Gastrocnemius medialis (tissue), 4 donors: ENCODE measurements at regions of chr5 and their contacts with region 1.

Region 1: DNA sequence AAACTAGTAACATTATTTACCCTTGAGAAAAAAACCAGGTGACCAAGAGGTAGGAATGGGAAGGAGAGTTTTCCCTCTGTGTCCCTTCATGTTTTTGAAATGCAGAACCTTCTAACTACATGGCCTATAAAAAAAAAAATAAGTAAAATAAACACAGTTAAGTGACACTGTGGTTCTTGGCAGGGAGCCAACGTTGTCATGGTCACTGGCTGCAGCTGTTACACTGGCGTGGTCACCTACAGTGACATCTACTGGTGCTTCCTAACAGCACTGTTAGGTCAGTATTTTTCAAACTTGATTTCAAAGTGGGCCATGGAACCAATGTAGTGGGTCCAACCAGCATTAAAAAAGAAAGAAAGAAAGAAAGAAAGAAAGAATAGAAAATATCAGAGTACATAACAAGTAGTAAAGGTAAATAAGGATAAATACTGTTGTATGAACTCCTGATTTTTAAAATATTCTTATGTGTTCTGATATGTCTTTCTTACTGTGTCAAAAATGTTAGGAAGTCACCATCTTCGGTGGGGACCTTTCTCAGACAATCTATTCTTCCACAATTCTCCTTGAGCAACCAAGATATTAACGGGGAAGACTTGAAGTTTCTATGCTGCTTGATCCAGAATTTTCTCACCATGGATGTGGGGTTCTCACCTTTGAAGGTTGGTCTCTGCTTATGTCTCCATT is 59.1 kb upstream of the PJA2 start:
- DNase-seq: peak; percentile 88 to 89
- ATAC-seq: peak; percentile 95 to 100
- H3K4me3 ChIP-seq: no peak overlapping the region
- H3K27ac ChIP-seq: no peak overlapping the region
- H3K4me1 ChIP-seq: peaks cover 0 to 9% of the 10 kb centered on the region in 2 donors
- H3K27me3 ChIP-seq: no peaks in the 10 kb centered on the region
- CTCF ChIP-seq: peak; percentile 42 to 83 (median 64)
- POLR2A ChIP-seq: no peak

Region 2: GRCh38 chr5:108642167-108642906 is 826.5 kb before region 1 on chr5:
- in situ Hi-C with region 1: no loop called
- intact Hi-C with region 1: loop called (anchors 2 kb)
- DNase-seq: peak; percentile 5 to 27
- ATAC-seq: peak; percentile 75 to 94
- H3K4me3 ChIP-seq: peak overlapping the region in 1 of 4 donors; percentile 20
- H3K27ac ChIP-seq: no peak overlapping the region
- H3K4me1 ChIP-seq: no peaks in the 10 kb centered on the region
- H3K27me3 ChIP-seq: no peaks in the 10 kb centered on the region
- CTCF ChIP-seq: peak; percentile 20 to 78 (median 57)
- POLR2A ChIP-seq: no peak

Region 3: GRCh38 chr5:108681079-108681921 is 787.6 kb before region 1 on chr5:
- in situ Hi-C with region 1: loop called in 2 of 4 experiments (anchors 10 to 25 kb)
- intact Hi-C with region 1: loop called (anchors 5 kb)
- DNase-seq: peak in 1 of 2 donors; percentile 50
- ATAC-seq: peak; percentile 96 to 100
- H3K4me3 ChIP-seq: peak overlapping the region in 2 of 4 donors; percentile 13 to 44
- H3K27ac ChIP-seq: peak overlapping the region; percentile 41 to 82 (median 76)
- H3K4me1 ChIP-seq: no peaks in the 10 kb centered on the region
- H3K27me3 ChIP-seq: no peaks in the 10 kb centered on the region
- CTCF ChIP-seq: peak in 4 of 5 experiments; percentile 65 to 86 (median 77)
- POLR2A ChIP-seq: no peak

Region 4: DNA sequence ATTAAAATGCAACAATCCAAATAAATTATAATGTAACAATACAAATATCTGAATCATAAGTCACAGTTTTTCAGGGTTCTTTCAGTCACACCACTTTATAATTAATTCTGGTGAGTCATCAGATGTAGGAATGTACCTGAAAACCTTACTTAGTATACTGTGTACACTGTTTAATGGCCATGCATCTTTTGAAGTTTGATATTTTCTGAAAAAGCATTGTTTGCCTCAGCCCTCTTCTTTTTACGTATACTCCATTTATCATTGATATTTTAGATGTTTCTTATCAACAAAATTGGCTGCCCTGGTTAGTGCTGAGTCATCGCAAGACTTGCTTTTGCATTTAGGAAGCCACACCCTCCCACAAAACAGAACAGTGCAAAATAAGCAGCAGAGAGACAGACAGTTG is 277.7 kb before region 1 on chr5:
- in situ Hi-C with region 1: no loop called
- intact Hi-C with region 1: no loop called
- DNase-seq: no peak
- ATAC-seq: no peak
- H3K4me3 ChIP-seq: no peak overlapping the region
- H3K27ac ChIP-seq: no peak overlapping the region
- H3K4me1 ChIP-seq: no peaks in the 10 kb centered on the region
- H3K27me3 ChIP-seq: no peaks in the 10 kb centered on the region
- CTCF ChIP-seq: no peak
- POLR2A ChIP-seq: no peak

Region 5: GRCh38 chr5:109304309-109304708 is 164.6 kb before region 1 on chr5:
- in situ Hi-C with region 1: no loop called
- intact Hi-C with region 1: loop called (anchors 10 kb)
- DNase-seq: no peak
- ATAC-seq: no peak
- H3K4me3 ChIP-seq: no peak overlapping the region
- H3K27ac ChIP-seq: no peak overlapping the region
- H3K4me1 ChIP-seq: peaks cover 4 to 9% of the 10 kb centered on the region in 2 donors
- H3K27me3 ChIP-seq: no peaks in the 10 kb centered on the region
- CTCF ChIP-seq: no peak
- POLR2A ChIP-seq: no peak

Region 6: GRCh38 chr5:109594217-109594616 is 125.3 kb after region 1 on chr5:
- in situ Hi-C with region 1: no loop called
- intact Hi-C with region 1: no loop called
- DNase-seq: no peak
- ATAC-seq: no peak
- H3K4me3 ChIP-seq: no peak overlapping the region
- H3K27ac ChIP-seq: no peak overlapping the region
- H3K4me1 ChIP-seq: no peaks in the 10 kb centered on the region
- H3K27me3 ChIP-seq: no peaks in the 10 kb centered on the region
- CTCF ChIP-seq: no peak
- POLR2A ChIP-seq: no peak